Ovary (tissue), 10 donors: ENCODE measurements at regions of chr2 and their contacts with region 1.

Region 1: DNA sequence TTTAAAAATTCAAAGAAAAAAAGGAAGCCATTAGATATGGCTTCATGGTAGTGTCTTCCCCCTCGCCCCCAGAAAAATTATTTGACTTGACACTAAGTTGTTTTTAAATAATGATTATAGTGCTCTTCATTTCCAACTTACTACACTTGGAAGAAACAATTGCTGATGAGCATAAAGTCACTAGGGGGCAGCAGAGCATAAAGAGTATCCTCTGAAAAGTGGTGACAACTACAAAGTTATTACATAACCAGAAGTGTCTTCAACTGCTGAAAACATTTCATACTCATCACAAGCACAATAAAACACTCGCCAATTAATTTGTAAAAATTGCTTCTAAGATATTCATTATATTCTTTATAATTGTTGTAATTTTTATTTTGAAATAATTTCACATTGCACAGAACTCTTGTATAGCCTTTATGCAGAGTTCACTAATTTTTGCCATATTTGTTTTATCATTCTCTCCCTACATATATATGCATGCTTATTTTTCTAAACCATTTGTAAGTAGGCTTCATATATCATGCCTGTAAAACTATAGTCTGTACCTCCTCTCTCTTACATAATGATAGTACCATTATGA is 54.9 kb downstream of the EXOC6B start:
- DNase-seq: peak in 3 of 5 donors; percentile 39 to 67 (median 43)
- H3K4me3 ChIP-seq: no peak overlapping the region
- H3K27ac ChIP-seq: no peak overlapping the region
- H3K4me1 ChIP-seq: no peaks in the 10 kb centered on the region
- H3K27me3 ChIP-seq: no peaks in the 10 kb centered on the region
- CTCF ChIP-seq: peak; percentile 53 to 81 (median 74)
- EP300 ChIP-seq: no peak
- POLR2A ChIP-seq: no peak

Region 2: DNA sequence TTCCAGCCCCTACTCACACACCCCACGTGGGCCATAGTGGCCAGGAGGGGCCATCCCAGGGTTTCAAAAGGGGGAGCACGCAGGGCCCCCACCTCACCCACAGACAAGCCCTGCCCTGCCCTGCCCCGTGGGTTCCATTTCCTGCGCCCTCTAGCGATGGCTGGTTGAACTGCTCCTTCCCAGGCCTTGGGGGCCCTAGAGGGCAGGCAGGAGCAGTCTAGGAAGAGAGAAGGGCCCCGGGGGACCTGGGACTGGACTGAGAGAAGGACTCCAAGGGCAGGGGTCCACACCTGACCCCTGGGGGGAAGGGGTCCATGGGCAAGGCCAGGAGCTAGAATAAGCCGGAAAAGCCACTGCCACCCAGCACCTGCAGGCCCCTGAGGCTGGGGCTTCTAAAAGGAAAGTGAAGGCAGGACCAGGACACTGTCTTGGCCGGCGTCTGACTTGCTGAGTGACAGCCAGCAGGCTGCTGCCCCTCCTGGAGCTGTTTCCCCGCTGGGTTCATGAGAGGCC is 633.4 kb before region 1 on chr2:
- intact Hi-C with region 1: no loop called
- DNase-seq: peak in 3 of 5 donors; percentile 11 to 56 (median 44)
- H3K4me3 ChIP-seq: no peak overlapping the region
- H3K27ac ChIP-seq: no peak overlapping the region
- H3K4me1 ChIP-seq: peaks cover 1% of the 10 kb centered on the region
- H3K27me3 ChIP-seq: no peaks in the 10 kb centered on the region
- CTCF ChIP-seq: peak; percentile 17
- EP300 ChIP-seq: no peak
- POLR2A ChIP-seq: no peak

Region 3: GRCh38 chr2:72862239-72862988 is 91.4 kb after region 1 on chr2:
- intact Hi-C with region 1: loop called (anchors 2 to 10 kb)
- DNase-seq: peak; percentile 81 to 91 (median 87)
- H3K4me3 ChIP-seq: no peak overlapping the region
- H3K27ac ChIP-seq: no peak overlapping the region
- H3K4me1 ChIP-seq: no peaks in the 10 kb centered on the region
- H3K27me3 ChIP-seq: no peaks in the 10 kb centered on the region
- CTCF ChIP-seq: peak; percentile 84 to 99 (median 91)
- EP300 ChIP-seq: no peak
- POLR2A ChIP-seq: no peak

Region 4: DNA sequence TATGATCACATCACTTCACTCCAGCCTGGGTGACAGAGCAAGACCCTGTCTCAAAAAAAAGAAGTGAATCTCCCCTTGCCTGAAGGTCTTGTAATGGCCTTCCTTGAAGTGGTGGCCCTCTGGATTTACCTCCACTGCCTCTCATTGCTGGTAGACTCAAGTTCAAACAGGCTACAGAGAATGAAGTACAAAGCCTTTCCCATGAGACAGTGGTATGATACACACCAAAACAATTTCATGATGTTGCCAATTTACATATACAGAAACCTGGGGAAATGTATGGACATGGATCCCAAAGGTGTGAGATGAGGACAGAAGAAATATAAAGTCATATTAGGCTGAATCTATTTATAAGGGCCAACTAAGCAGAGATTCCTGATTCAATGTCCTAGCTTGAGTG is 426.6 kb after region 1 on chr2:
- intact Hi-C with region 1: no loop called
- DNase-seq: no peak
- H3K4me3 ChIP-seq: no peak overlapping the region
- H3K27ac ChIP-seq: no peak overlapping the region
- H3K4me1 ChIP-seq: peaks cover 2% of the 10 kb centered on the region
- H3K27me3 ChIP-seq: peaks cover under 1% of the 10 kb centered on the region
- CTCF ChIP-seq: no peak
- EP300 ChIP-seq: no peak
- POLR2A ChIP-seq: no peak

Region 5: GRCh38 chr2:74608991-74609390 is 1838.0 kb after region 1 on chr2:
- intact Hi-C with region 1: loop called in 1 of 4 experiments (anchors 5 kb)
- DNase-seq: no peak
- H3K4me3 ChIP-seq: no peak overlapping the region
- H3K27ac ChIP-seq: no peak overlapping the region
- H3K4me1 ChIP-seq: no peaks in the 10 kb centered on the region
- H3K27me3 ChIP-seq: no peaks in the 10 kb centered on the region
- CTCF ChIP-seq: no peak
- EP300 ChIP-seq: no peak
- POLR2A ChIP-seq: no peak